Activated CD4-positive, alpha-beta T cell treated with anti-CD3 and anti-CD28 coated beads, Interleukin-2, amount 10 ng/mL, durations not matched to agents 24 days and 14 days (primary cell): ENCODE measurements at regions of chr17 and their contacts with region 1.

Region 1: DNA sequence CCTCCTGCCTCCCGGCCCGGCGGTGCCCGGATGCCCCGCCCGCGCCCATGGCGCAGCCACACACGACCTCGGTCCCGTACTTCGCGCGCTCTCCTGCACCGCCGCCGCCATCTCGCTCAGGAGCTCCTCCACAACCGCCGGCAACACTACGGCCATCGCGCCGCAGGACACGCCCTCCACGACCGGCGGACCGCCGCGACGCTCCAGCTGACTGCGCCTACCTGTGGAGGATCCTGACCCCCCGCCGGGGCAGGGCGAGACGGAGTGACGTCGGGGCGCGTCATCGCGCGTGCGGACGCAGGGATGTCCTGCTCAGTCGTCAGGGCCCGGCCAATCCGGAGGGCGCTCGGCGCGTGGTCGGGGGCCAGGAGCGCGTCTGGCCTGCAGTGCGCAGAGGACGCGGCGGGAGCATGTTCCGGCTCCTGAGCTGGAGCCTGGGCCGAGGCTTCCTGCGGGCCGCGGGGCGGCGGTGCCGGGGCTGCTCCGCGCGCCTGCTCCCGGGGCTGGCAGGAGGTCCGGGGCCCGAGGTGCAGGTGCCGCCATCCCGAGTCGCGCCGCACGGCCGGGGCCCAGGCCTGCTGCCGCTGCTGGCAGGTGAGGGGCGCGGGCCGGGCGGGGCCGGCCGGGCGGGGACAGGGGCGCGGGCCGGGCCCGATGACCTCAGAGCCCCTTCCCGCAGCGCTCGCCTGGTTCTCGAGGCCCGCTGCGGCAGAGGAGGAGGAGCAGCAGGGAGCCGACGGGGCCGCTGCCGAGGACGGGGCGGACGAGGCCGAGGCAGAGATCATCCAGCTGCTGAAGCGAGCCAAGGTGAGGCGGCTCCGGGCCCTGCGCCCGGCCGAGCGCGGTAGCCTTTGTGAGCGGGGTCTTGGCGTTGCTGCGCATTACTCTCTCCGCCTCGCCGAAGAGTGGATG is at the starts of genes TTC19 and ZSWIM7:
- DNase-seq: peak; percentile 98
- H3K4me3 Mint-ChIP-seq: peak within 1 kb of the TSS; percentile 91
- H3K27ac Mint-ChIP-seq: peak within 1 kb of the TSS; percentile 98
- H3K4me1 Mint-ChIP-seq: peaks cover 21% of the 10 kb centered on the region
- H3K27me3 Mint-ChIP-seq: no peaks in the 10 kb centered on the region
- total RNA-seq, gene TTC19: 35.3 and 38.9 TPM in 2 replicates
- total RNA-seq, gene ZSWIM7: 10.1 and 11.0 TPM in 2 replicates

Region 2: DNA sequence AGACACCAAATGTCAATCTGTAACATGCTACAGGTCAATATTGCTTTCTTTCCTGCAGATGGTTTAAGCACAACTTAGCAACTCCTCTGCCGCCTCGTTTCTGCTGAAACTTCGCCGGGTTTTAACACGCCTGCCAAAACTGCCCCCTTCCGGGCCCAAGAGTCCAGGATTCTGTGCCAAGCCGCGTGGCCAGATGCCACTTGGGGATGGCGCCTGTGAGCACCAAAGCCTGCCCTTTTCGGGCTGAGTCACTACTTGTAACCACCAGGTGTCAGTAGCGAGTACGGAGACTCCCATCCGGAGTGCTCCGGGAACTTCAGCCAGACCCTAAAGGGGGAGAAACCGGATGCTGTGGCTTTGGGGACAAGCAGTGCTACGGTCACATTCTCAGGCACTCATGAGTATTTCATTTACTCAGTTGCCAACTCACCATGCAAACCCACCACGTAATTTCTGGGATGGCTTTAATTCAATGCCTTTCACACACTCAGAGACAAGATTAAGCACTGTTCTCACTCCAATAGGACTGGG is 742.4 kb before region 1 on chr17:
- intact Hi-C with region 1: loop called (anchors 10 kb)
- DNase-seq: peak; percentile 88
- H3K4me3 Mint-ChIP-seq: peak overlapping the region; percentile 5
- H3K27ac Mint-ChIP-seq: no peak overlapping the region
- H3K4me1 Mint-ChIP-seq: peaks cover 20% of the 10 kb centered on the region
- H3K27me3 Mint-ChIP-seq: peaks cover 53% of the 10 kb centered on the region

Region 3: GRCh38 chr17:15886804-15887203 is 112.9 kb before region 1 on chr17:
- intact Hi-C with region 1: loop called (anchors 5 kb)
- DNase-seq: peak; percentile 73
- H3K4me3 Mint-ChIP-seq: no peak overlapping the region
- H3K27ac Mint-ChIP-seq: peak overlapping the region; percentile 60
- H3K4me1 Mint-ChIP-seq: peaks cover 20% of the 10 kb centered on the region
- H3K27me3 Mint-ChIP-seq: peaks cover 3% of the 10 kb centered on the region

Region 4: GRCh38 chr17:15944759-15945529 is 54.8 kb before region 1 on chr17 and contains the start of gene ADORA2B:
- intact Hi-C with region 1: loop called (anchors 1 kb)
- DNase-seq: peak; percentile 86
- H3K4me3 Mint-ChIP-seq: peak within 1 kb of the TSS; percentile 78
- H3K27ac Mint-ChIP-seq: peak within 1 kb of the TSS; percentile 53
- H3K4me1 Mint-ChIP-seq: peaks cover 13% of the 10 kb centered on the region
- H3K27me3 Mint-ChIP-seq: peaks cover 47% of the 10 kb centered on the region
- total RNA-seq, gene ADORA2B: 1.9 and 3.1 TPM in 2 replicates

Region 5: GRCh38 chr17:15954222-15954621 is 45.5 kb before region 1 on chr17:
- intact Hi-C with region 1: loop called (anchors 1 kb)
- DNase-seq: no peak
- H3K4me3 Mint-ChIP-seq: no peak overlapping the region
- H3K27ac Mint-ChIP-seq: no peak overlapping the region
- H3K4me1 Mint-ChIP-seq: peaks cover 23% of the 10 kb centered on the region
- H3K27me3 Mint-ChIP-seq: peaks cover 54% of the 10 kb centered on the region

Region 6: GRCh38 chr17:16027708-16028584 is 28.3 kb after region 1 on chr17:
- intact Hi-C with region 1: loop called (anchors 1 kb)
- DNase-seq: peak; percentile 78
- H3K4me3 Mint-ChIP-seq: peak overlapping the region; percentile 71
- H3K27ac Mint-ChIP-seq: peak overlapping the region; percentile 93
- H3K4me1 Mint-ChIP-seq: peaks cover 20% of the 10 kb centered on the region
- H3K27me3 Mint-ChIP-seq: no peaks in the 10 kb centered on the region

Region 7: GRCh38 chr17:16232391-16232790 is 232.7 kb after region 1 on chr17:
- intact Hi-C with region 1: no loop called
- DNase-seq: no peak
- H3K4me3 Mint-ChIP-seq: no peak overlapping the region
- H3K27ac Mint-ChIP-seq: no peak overlapping the region
- H3K4me1 Mint-ChIP-seq: peaks cover 15% of the 10 kb centered on the region
- H3K27me3 Mint-ChIP-seq: no peaks in the 10 kb centered on the region

Region 8: DNA sequence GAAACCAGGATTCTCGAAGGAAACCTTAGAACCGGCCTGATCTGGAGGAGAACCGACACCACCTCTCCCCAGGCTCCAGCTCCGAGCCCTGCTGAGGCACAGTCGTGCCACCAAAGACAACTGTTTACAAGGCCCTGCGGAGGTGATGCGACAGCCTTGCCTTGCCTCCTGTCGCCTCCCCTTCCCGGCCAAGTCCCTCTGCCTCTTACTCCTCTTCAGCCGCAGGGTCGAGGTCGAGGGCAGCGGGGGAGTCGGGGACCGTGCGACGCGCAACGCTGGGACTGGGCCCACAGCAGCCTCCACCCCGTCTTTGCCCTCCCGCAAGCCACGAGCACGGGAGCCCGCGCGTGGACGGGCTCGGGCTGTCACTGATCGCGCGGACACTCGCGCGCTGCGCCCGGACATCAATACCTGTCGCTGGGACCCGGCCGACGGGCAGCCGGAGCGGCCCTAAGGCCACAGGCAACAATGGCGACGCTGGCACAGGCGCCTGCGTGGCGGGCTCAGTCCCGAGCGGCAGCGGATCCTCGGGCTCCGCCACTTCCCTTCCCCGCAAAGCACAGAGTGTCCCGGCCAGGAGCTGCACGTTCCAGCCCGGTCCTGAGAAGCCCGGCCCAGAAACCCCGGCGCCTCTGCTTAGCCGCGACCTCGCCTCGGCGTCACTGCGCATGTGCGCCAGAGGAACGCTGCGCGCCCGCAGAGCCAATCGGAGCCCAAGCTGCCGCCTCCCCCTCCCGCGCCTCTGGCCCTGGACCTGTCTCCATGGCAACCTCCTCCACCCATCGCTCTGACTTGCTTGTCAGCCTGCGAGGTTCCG is 569.1 kb after region 1 on chr17 and contains the start of gene ZNF287:
- intact Hi-C with region 1: no loop called
- DNase-seq: peak; percentile 97
- H3K4me3 Mint-ChIP-seq: peak within 1 kb of the TSS; percentile 84
- H3K27ac Mint-ChIP-seq: peak within 1 kb of the TSS; percentile 73
- H3K4me1 Mint-ChIP-seq: peaks cover 9% of the 10 kb centered on the region
- H3K27me3 Mint-ChIP-seq: peaks cover 5% of the 10 kb centered on the region
- total RNA-seq, gene ZNF287: 5.2 and 6.3 TPM in 2 replicates